ENCODE measurements at regions of chr10 and their contacts with region 1.

Region 1: DNA sequence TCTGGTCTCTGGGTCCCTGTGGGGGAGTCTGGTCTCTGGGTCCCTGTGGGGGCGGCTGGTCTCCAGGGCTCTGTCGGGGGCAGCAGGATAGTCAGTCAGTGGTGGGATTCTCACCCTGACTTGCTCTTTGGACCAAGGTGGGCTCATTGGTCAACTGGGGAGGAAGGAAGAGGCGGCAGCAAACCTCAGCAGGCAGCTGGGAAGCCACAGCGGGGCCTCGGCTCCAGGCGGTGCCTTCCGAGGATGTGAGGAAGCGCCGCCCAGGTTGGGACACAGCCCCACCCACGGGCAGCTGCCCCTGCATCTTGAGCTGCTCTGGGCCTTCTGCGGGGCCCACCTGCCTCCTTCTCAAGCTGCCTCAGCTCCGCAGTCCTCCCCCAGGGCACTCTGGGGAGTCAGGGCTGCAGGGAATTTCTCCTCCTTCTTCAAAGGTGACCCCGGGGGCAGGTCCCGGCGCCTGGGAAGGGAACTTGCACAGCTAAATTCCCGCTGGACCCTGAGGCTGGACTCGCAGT is 20.4 kb upstream of the KNDC1 start:
- DNase-seq: peak in 2 of 5 donors; percentile 10 to 16
- H3K4me3 ChIP-seq: no peak overlapping the region
- H3K27ac ChIP-seq: no peak overlapping the region
- H3K4me1 ChIP-seq: no peaks in the 10 kb centered on the region
- H3K27me3 ChIP-seq: no peaks in the 10 kb centered on the region
- CTCF ChIP-seq: no peak
- EP300 ChIP-seq: no peak
- POLR2A ChIP-seq: no peak

Region 2: GRCh38 chr10:132752378-132752777 is 387.2 kb before region 1 on chr10:
- intact Hi-C with region 1: no loop called
- DNase-seq: no peak
- H3K4me3 ChIP-seq: no peak overlapping the region
- H3K27ac ChIP-seq: no peak overlapping the region
- H3K4me1 ChIP-seq: no peaks in the 10 kb centered on the region
- H3K27me3 ChIP-seq: no peaks in the 10 kb centered on the region
- CTCF ChIP-seq: no peak
- EP300 ChIP-seq: no peak
- POLR2A ChIP-seq: no peak

Region 3: GRCh38 chr10:133318494-133319127 is 179.0 kb after region 1 on chr10:
- intact Hi-C with region 1: loop called in 1 of 4 experiments (anchors 5 kb)
- DNase-seq: peak; percentile 41 to 73 (median 64)
- H3K4me3 ChIP-seq: peak overlapping the region; percentile 23
- H3K27ac ChIP-seq: no peak overlapping the region
- H3K4me1 ChIP-seq: no peaks in the 10 kb centered on the region
- H3K27me3 ChIP-seq: no peaks in the 10 kb centered on the region
- CTCF ChIP-seq: peak; percentile 26 to 51 (median 47)
- EP300 ChIP-seq: no peak
- POLR2A ChIP-seq: no peak

Measured in ovary (tissue), 10 donors.